ENCODE measurements at regions of chr1 and their contacts with region 1.

Region 1: DNA sequence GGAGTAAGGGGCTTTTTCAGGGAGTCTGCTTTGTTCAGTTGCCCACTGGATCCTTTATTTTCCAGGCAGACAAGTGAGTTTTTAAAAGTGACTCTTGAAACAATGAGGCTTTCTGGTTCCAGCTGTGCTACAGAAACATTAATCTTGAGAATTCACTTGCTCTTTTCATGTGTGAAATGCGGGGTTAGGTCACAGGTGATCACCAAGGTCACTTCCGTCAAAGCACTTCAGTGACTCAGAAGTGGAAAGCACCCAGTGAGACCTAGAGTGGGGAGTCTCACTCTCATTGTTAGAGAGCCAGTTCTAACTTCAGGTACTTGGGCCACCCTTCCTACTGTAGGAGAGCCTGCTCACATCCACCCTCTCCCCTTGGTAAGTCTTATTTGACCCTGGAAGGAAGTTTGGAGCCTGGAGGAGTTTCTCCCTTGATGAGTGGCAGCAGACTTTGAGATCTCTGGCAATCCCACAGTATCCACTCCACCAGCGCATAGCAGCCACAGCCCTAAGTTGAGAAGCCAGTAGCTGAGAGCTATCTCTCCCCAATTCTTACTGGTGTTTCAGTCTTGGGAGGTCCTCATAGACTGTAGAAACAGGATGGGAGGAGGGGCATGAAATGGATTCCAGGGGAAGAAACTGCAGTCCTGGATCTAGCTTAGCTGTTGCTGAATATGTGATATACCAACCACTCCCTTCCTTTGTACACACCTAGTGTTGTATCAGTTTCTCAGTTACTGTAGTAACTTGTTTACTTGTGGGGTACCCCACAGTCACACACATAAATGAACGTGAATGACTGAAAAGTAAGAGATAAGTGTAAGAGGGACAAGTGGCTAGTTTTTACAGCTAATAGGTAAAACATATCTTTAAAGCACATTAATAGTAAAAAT is 3.1 kb downstream of the TACSTD2 start:
- DNase-seq: peak; percentile 76
- CTCF ChIP-seq: no peak

Region 2: DNA sequence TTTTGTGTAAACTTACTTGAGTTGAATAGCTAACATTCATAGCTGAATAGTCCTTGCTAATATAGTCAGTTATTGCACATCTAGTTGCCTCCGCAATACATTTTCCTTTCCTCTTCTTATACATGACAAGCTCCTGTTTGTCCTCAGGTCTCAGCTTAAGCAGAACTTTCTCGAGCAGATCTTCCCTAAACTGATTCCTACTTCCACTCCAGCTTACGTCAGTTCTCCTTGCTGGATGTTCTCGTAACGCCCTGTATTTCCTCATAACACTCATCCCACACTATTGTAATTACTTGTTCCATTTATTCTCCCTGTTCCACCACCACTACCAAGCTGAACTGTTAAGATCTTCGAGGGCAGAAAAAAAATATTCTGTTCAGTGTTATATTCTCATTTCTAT is 12.3 kb before region 1 on chr1:
- CTCF ChIA-PET with region 1: interaction called, 16 read pairs
- POLR2A ChIA-PET with region 1: no interaction called
- DNase-seq: no peak
- CTCF ChIP-seq: no peak